Heart right ventricle (tissue), 16 donors: ENCODE measurements at regions of chr1 and their contacts with region 1.

Region 1: GRCh38 chr1:98048244-98048643 is 127.4 kb upstream of the DPYD start:
- DNase-seq: peak; percentile 76 to 77
- ATAC-seq: peak; percentile 66 to 94 (median 90)
- H3K4me3 ChIP-seq: peak overlapping the region in 2 of 10 donors; percentile 13 to 15
- H3K27ac ChIP-seq: no peak overlapping the region
- H3K4me1 ChIP-seq: peaks cover 8 to 32% (median 24%) of the 10 kb centered on the region in 9 donors
- H3K27me3 ChIP-seq: peaks cover 20 to 98% (median 86%) of the 10 kb centered on the region in 7 donors
- CTCF ChIP-seq: peak in 2 of 9 donors; percentile 17 to 20

Region 2: GRCh38 chr1:97145321-97145956 is 902.8 kb before region 1 on chr1:
- intact Hi-C with region 1: loop called in 2 of 10 experiments (anchors 10 kb)
- DNase-seq: no peak
- ATAC-seq: no peak
- H3K4me3 ChIP-seq: no peak overlapping the region
- H3K27ac ChIP-seq: no peak overlapping the region
- H3K4me1 ChIP-seq: no peaks in the 10 kb centered on the region
- H3K27me3 ChIP-seq: no peaks in the 10 kb centered on the region
- CTCF ChIP-seq: no peak

Region 3: DNA sequence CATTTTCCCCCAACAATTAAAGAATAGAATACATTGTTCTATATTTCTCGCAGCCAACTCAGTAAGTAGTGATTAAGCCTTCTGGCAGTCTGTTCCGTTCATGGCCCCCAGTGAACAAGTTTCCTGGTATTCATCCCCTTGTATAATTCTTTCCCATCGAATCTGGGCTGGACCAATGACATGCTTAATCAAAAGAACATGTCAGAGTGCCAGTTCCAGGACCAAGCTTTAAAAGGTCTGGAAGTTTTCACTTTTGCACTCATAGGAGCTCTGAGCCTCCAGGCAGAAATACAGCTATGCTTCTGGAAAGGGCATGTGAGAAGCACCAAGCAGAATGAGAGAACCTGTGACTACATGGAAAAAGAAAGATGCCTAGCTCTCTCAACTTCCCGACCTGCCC is 104.9 kb before region 1 on chr1:
- intact Hi-C with region 1: loop called in 1 of 10 experiments (anchors 10 kb)
- DNase-seq: no peak
- ATAC-seq: peak in 1 of 8 donors; percentile 33
- H3K4me3 ChIP-seq: no peak overlapping the region
- H3K27ac ChIP-seq: no peak overlapping the region
- H3K4me1 ChIP-seq: peaks cover 0 to 19% (median 0%) of the 10 kb centered on the region in 9 donors
- H3K27me3 ChIP-seq: peaks cover 0 to 4% (median 0%) of the 10 kb centered on the region in 7 donors
- CTCF ChIP-seq: no peak

Region 4: GRCh38 chr1:98119796-98120195 is 71.6 kb after region 1 on chr1:
- intact Hi-C with region 1: no loop called
- DNase-seq: no peak
- ATAC-seq: no peak
- H3K4me3 ChIP-seq: no peak overlapping the region
- H3K27ac ChIP-seq: no peak overlapping the region
- H3K4me1 ChIP-seq: no peaks in the 10 kb centered on the region
- H3K27me3 ChIP-seq: peaks cover 0 to 4% (median 0%) of the 10 kb centered on the region in 7 donors
- CTCF ChIP-seq: no peak